GM12878 (cell line): ENCODE measurements at regions of chr16 and their contacts with region 1.

Region 1: GRCh38 chr16:2926650-2927646 is 15.2 kb downstream of the FLYWCH1 start:
- DNase-seq: no peak
- ATAC-seq: peak; percentile 100
- H3K4me3 ChIP-seq: no peak overlapping the region
- H3K27ac ChIP-seq: no peak overlapping the region
- H3K4me1 ChIP-seq: no peaks in the 10 kb centered on the region
- H3K27me3 ChIP-seq: no peaks in the 10 kb centered on the region
- CTCF ChIP-seq: peak; percentile 89 to 95 (median 93)
- EP300 ChIP-seq: no peak
- POLR2A ChIP-seq: no peak
- RAD21 ChIP-seq: peak; percentile 66

Region 2: DNA sequence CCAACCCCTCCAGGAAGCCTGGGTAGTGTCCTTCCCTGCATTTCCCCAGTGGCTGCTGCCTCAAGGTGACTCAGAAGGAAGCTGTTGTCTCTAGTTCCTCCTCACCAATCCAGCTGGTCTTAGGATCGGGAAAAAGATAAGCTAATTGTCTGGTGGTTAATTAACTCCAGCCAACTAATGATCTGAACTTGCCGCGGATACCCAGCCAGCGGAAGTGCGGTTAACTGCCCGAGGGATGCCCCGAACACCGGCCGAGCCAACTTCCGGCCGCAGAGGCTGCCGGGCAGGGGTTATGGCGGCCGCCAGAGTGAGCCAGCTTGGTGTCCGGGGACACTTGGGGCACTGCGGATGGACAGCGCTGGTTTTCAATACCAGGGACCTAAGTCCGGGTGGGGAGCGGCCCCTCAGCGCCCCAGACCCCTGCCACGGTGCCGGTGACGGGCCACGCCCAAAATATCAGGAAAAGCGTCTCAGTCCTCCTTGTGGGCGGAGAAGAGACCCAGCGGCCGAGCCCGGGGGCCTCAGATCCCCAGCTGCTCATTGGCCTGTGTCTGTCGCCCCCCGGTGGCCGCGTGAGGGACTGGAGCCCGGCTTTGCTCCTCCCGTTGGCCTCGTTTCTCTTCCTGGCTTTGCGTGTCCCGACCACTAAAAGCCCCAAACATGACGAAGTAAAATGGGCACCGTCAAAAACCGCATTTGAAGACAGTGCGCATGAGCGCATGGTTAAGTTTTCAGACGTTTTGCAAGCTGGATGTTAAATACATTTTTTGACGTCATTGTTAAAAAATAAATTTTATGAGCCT is 58.8 kb before region 1 on chr16:
- CTCF ChIA-PET with region 1: interaction called, 27 read pairs
- POLR2A ChIA-PET with region 1: no interaction called
- RAD21 ChIA-PET with region 1: interaction called, 4 read pairs
- SMC1A ChIA-PET with region 1: interaction called, 4 read pairs
- in situ Hi-C with region 1: no loop called
- intact Hi-C with region 1: no loop called
- DNase-seq: peak; percentile 66
- ATAC-seq: peak; percentile 100
- H3K4me3 ChIP-seq: peak overlapping the region; percentile 60
- H3K27ac ChIP-seq: peak overlapping the region; percentile 71
- H3K4me1 ChIP-seq: peaks cover 4% of the 10 kb centered on the region
- H3K27me3 ChIP-seq: no peaks in the 10 kb centered on the region; a peak in 1 of 4 replicates
- CTCF ChIP-seq: peak; percentile 95 to 98 (median 98); a peak in 5 of 6 replicates
- EP300 ChIP-seq: peak in 1 of 2 experiments; percentile 28; a peak in 1 of 4 replicates
- POLR2A ChIP-seq: peak; percentile 87
- RAD21 ChIP-seq: peak; percentile 89

Region 3: GRCh38 chr16:2883027-2883851 is 43.7 kb before region 1 on chr16 and contains the start of gene FLYWCH2:
- CTCF ChIA-PET with region 1: interaction called, 11 read pairs
- POLR2A ChIA-PET with region 1: no interaction called
- RAD21 ChIA-PET with region 1: interaction called, 3 read pairs
- SMC1A ChIA-PET with region 1: interaction called, 3 read pairs
- in situ Hi-C with region 1: no loop called
- intact Hi-C with region 1: no loop called
- DNase-seq: peak; percentile 90
- ATAC-seq: peak; percentile 89
- H3K4me3 ChIP-seq: peak within 1 kb of the TSS; percentile 90
- H3K27ac ChIP-seq: peak within 1 kb of the TSS; percentile 69
- H3K4me1 ChIP-seq: peaks cover 8% of the 10 kb centered on the region
- H3K27me3 ChIP-seq: no peaks in the 10 kb centered on the region
- CTCF ChIP-seq: peak in 1 of 3 experiments; percentile 8; a peak in 1 of 6 replicates
- EP300 ChIP-seq: no peak
- POLR2A ChIP-seq: peak; percentile 93
- RAD21 ChIP-seq: no peak
- polyA plus RNA-seq, gene FLYWCH2: 0.27 to 1.8 TPM

Region 4: DNA sequence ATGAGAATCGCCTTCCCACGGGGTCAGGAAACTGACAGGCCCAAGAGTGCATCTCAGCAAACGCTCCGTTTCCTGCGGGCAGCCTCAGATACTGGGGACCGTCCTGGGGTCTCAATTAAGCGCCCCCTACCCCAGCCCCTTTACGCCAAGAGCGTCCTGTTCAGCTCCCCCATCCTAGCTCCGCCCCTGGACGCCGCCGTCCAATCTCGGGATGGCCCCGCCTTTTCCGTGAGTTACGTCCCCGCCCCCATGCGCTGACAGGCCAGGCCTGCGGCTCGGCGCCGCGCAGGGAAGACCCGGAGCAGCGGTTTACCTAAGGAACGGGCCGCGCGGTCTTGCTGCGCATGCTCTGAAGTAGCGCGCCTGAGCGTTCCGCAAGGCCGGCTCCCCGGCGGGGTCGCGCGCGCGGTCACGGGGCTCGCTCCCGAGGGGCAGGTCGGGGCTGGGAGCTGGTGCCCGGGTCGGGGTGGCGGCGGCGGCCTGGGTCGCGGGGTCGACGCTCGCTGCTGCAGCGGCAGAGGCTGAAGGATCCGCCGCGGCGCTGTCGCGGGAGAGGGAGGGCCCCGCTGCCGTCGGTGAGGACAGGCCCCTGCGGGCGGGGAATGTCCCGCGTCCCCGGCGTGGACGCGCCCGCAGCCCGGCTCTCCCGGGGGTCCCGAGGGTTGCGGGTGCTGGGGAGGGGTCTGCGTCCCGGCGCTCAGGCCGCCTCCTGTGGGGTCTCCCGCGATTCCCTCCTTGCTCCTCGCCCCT is 15.2 kb before region 1 on chr16 and contains the start of gene FLYWCH1:
- CTCF ChIA-PET with region 1: interaction called, 21 read pairs
- POLR2A ChIA-PET with region 1: interaction called, 7 read pairs
- RAD21 ChIA-PET with region 1: interaction called, 3 read pairs
- SMC1A ChIA-PET with region 1: interaction called, 9 read pairs
- in situ Hi-C with region 1: no loop called
- intact Hi-C with region 1: no loop called
- DNase-seq: peak; percentile 88
- ATAC-seq: peak; percentile 98
- H3K4me3 ChIP-seq: peak within 1 kb of the TSS; percentile 97
- H3K27ac ChIP-seq: peak within 1 kb of the TSS; percentile 54
- H3K4me1 ChIP-seq: peaks cover 3% of the 10 kb centered on the region; the same call in 1 of the 2 replicates
- H3K27me3 ChIP-seq: no peaks in the 10 kb centered on the region
- CTCF ChIP-seq: no peak
- EP300 ChIP-seq: no peak
- POLR2A ChIP-seq: peak; percentile 86
- RAD21 ChIP-seq: no peak
- polyA plus RNA-seq, gene FLYWCH1: 0.47 to 0.60 TPM

Region 5: GRCh38 chr16:2952679-2953078 is 25.7 kb after region 1 on chr16:
- CTCF ChIA-PET with region 1: interaction called, 10 read pairs
- POLR2A ChIA-PET with region 1: no interaction called
- RAD21 ChIA-PET with region 1: interaction called, 3 read pairs
- SMC1A ChIA-PET with region 1: no interaction called
- in situ Hi-C with region 1: no loop called
- intact Hi-C with region 1: no loop called
- DNase-seq: no peak
- ATAC-seq: no peak; the same call in 2 of the 3 replicates
- H3K4me3 ChIP-seq: no peak overlapping the region
- H3K27ac ChIP-seq: no peak overlapping the region
- H3K4me1 ChIP-seq: peaks cover 17% of the 10 kb centered on the region
- H3K27me3 ChIP-seq: no peaks in the 10 kb centered on the region
- CTCF ChIP-seq: no peak
- EP300 ChIP-seq: no peak
- POLR2A ChIP-seq: no peak
- RAD21 ChIP-seq: no peak

Region 6: DNA sequence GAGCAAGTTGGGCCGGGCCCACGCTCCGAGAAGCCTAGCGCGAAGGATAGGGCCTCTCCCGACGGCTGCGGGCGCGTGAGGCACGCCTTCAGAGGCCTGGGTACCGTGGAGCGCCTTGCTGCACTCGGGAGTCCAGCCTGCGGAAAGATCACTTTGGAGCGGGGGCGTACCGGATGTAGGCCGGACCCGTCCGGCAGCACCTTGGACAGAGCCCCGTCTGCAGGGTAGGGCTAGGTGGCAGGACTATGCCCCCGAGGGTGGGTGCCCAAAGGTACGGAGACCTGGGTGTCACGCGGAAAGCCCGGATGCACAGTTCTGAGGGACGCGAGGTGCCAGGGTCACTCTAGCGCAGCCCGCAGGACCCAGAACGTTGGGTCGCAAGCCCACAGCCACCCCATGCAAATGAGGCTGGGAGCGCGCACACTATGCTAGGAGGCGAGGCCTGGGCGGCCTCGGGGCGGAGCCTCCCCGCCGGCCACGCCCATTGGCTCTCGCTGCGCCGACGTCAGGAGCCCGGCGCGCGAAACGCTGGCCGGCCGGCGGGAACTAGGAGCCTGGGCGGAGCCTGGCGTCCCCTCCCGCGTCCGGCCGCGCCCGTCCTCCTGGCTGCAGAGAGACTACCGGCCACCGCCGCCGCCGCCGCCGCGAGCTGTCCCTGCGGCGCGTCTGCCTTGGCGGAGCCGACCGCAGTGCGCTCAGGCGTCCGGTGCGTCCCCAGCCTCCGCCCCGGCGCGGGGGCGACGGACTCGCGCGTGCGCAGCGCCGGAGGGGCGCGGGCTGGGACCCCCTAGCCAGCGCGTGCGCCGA is 42.0 kb after region 1 on chr16 and contains the start of gene PAQR4:
- CTCF ChIA-PET with region 1: interaction called, 20 read pairs
- POLR2A ChIA-PET with region 1: no interaction called
- RAD21 ChIA-PET with region 1: interaction called, 4 read pairs
- SMC1A ChIA-PET with region 1: no interaction called
- in situ Hi-C with region 1: no loop called
- intact Hi-C with region 1: no loop called
- DNase-seq: peak; percentile 72
- ATAC-seq: peak; percentile 76
- H3K4me3 ChIP-seq: peak within 1 kb of the TSS; percentile 91
- H3K27ac ChIP-seq: peak within 1 kb of the TSS; percentile 78
- H3K4me1 ChIP-seq: peaks cover 26% of the 10 kb centered on the region
- H3K27me3 ChIP-seq: no peaks in the 10 kb centered on the region
- CTCF ChIP-seq: no peak
- EP300 ChIP-seq: 0 out of 4 replicates have a peak, but pooled peaks of 1 of the 2 experiments have one; percentile 7
- POLR2A ChIP-seq: 0 out of 2 replicates have a peak, but pooled peaks have one; percentile 20
- RAD21 ChIP-seq: no peak
- polyA plus RNA-seq, gene PAQR4: 0.39 to 0.84 TPM